K562 (cell line): ENCODE measurements at regions of chr7 and their contacts with region 1.

Region 1: GRCh38 chr7:49822856-49823255 is 49.4 kb downstream of the VWC2 start:
- DNase-seq: no peak
- ATAC-seq: no peak
- H3K4me3 ChIP-seq: no peak overlapping the region
- H3K27ac ChIP-seq: no peak overlapping the region
- H3K4me1 ChIP-seq: no peaks in the 10 kb centered on the region
- H3K27me3 ChIP-seq: no peaks in the 10 kb centered on the region
- CTCF ChIP-seq: no peak
- EP300 ChIP-seq: no peak
- POLR2A ChIP-seq: no peak
- RAD21 ChIP-seq: no peak

Region 2: DNA sequence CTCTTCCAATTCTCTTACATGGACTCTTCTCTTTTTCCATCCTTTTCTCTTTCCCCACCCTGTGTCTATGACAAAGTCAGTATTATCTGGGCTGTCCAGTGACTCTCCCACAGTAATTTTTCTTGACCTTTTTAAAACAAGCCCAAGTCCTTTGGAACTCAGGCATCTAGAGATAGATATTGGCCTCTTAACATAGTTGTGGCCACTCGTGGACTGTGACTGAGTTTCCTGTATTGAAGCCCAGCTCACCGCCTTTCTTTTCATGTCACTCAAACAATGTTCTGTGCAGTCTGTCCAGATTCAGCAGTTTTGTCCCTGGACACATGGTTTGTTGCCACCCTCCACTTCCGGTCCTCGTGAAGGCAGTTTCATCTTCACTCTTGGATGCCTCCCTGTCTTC is 1009.4 kb before region 1 on chr7:
- CTCF ChIA-PET with region 1: no interaction called
- POLR2A ChIA-PET with region 1: no interaction called
- in situ Hi-C with region 1: no loop called
- intact Hi-C with region 1: loop called (anchors 5 kb)
- DNase-seq: no peak
- ATAC-seq: no peak
- H3K4me3 ChIP-seq: no peak overlapping the region
- H3K27ac ChIP-seq: no peak overlapping the region
- H3K4me1 ChIP-seq: no peaks in the 10 kb centered on the region
- H3K27me3 ChIP-seq: no peaks in the 10 kb centered on the region
- CTCF ChIP-seq: no peak
- EP300 ChIP-seq: no peak
- POLR2A ChIP-seq: no peak
- RAD21 ChIP-seq: no peak

Region 3: GRCh38 chr7:49174396-49174795 is 648.5 kb before region 1 on chr7:
- CTCF ChIA-PET with region 1: no interaction called
- POLR2A ChIA-PET with region 1: no interaction called
- in situ Hi-C with region 1: no loop called
- intact Hi-C with region 1: no loop called
- DNase-seq: no peak
- ATAC-seq: no peak
- H3K4me3 ChIP-seq: no peak overlapping the region
- H3K27ac ChIP-seq: no peak overlapping the region
- H3K4me1 ChIP-seq: no peaks in the 10 kb centered on the region
- H3K27me3 ChIP-seq: no peaks in the 10 kb centered on the region
- CTCF ChIP-seq: no peak
- EP300 ChIP-seq: no peak
- POLR2A ChIP-seq: no peak
- RAD21 ChIP-seq: no peak

Region 4: GRCh38 chr7:49812534-49812933 is 10.3 kb before region 1 on chr7:
- CTCF ChIA-PET with region 1: no interaction called
- POLR2A ChIA-PET with region 1: no interaction called
- in situ Hi-C with region 1: no loop called
- intact Hi-C with region 1: no loop called
- DNase-seq: no peak
- ATAC-seq: no peak
- H3K4me3 ChIP-seq: no peak overlapping the region
- H3K27ac ChIP-seq: no peak overlapping the region
- H3K4me1 ChIP-seq: no peaks in the 10 kb centered on the region
- H3K27me3 ChIP-seq: no peaks in the 10 kb centered on the region
- CTCF ChIP-seq: no peak
- EP300 ChIP-seq: no peak
- POLR2A ChIP-seq: no peak
- RAD21 ChIP-seq: no peak